CD4-positive, alpha-beta T cell (primary cell): ENCODE measurements at regions of chr2 and their contacts with region 1.

Region 1: GRCh38 chr2:241069821-241070281 is 32.2 kb downstream of the MTERF4 start:
- DNase-seq: peak in 1 of 14 experiments; percentile 18
- ATAC-seq: no peak
- H3K4me3 ChIP-seq: no peak overlapping the region
- H3K4me3 Mint-ChIP-seq: no peak overlapping the region
- H3K27ac ChIP-seq: no peak overlapping the region
- H3K27ac Mint-ChIP-seq: no peak overlapping the region
- H3K4me1 ChIP-seq: no peaks in the 10 kb centered on the region
- H3K4me1 Mint-ChIP-seq: no peaks in the 10 kb centered on the region
- H3K27me3 ChIP-seq: no peaks in the 10 kb centered on the region
- H3K27me3 Mint-ChIP-seq: no peaks in the 10 kb centered on the region
- CTCF ChIP-seq: no peak

Region 2: DNA sequence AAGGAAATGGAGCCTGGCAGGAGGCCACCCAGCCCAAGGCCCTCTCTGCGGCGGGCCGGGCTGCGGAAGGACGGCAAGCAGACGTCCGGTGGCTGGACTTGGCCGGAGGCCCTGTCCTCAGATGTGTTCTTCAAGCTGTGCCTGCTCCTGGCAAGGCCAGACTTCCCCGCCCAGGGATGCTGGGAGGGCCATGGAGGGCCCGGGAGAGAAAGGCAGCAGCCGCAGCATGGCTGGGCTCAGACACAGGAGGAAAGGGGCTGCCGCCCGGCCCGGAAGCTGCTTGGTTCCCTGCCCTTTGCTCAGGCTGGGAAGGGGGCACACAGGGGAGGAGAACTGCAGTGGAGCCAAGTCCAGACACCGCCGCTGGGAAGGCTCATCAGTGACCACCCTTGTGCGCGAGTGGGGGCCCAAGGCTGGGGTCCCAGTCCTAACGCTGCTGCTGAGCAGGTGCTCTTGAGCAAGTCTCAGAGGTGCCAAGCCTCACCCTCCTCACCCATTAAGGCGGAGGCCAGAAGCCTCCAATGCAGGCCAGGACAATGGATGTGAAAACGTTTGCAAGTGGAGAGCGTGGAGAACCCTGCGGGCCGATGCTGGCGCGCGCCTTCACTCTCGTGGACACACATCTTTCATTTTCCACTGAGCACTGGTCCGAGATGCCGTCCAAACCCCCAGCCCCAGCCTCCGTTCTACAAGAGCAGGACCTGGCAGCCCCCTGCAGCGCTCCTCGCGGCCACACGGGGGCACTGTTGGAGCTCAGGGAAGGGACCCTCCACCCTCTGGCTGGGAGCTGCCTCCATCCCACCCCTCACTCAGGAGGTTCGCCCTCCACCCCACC is 155.8 kb before region 1 on chr2:
- CTCF ChIA-PET with region 1: no interaction called
- POLR2A ChIA-PET with region 1: no interaction called
- intact Hi-C with region 1: loop called in 1 of 2 experiments (anchors 10 kb)
- DNase-seq: peak; percentile 49 to 74 (median 62)
- ATAC-seq: peak; percentile 79
- H3K4me3 ChIP-seq: no peak overlapping the region
- H3K4me3 Mint-ChIP-seq: no peak overlapping the region
- H3K27ac ChIP-seq: no peak overlapping the region
- H3K27ac Mint-ChIP-seq: no peak overlapping the region
- H3K4me1 ChIP-seq: peaks cover 3% of the 10 kb centered on the region
- H3K4me1 Mint-ChIP-seq: no peaks in the 10 kb centered on the region
- H3K27me3 ChIP-seq: peaks cover 29 to 31% of the 10 kb centered on the region in 2 experiments
- H3K27me3 Mint-ChIP-seq: peaks cover 25% of the 10 kb centered on the region
- CTCF ChIP-seq: peak; percentile 87

Region 3: DNA sequence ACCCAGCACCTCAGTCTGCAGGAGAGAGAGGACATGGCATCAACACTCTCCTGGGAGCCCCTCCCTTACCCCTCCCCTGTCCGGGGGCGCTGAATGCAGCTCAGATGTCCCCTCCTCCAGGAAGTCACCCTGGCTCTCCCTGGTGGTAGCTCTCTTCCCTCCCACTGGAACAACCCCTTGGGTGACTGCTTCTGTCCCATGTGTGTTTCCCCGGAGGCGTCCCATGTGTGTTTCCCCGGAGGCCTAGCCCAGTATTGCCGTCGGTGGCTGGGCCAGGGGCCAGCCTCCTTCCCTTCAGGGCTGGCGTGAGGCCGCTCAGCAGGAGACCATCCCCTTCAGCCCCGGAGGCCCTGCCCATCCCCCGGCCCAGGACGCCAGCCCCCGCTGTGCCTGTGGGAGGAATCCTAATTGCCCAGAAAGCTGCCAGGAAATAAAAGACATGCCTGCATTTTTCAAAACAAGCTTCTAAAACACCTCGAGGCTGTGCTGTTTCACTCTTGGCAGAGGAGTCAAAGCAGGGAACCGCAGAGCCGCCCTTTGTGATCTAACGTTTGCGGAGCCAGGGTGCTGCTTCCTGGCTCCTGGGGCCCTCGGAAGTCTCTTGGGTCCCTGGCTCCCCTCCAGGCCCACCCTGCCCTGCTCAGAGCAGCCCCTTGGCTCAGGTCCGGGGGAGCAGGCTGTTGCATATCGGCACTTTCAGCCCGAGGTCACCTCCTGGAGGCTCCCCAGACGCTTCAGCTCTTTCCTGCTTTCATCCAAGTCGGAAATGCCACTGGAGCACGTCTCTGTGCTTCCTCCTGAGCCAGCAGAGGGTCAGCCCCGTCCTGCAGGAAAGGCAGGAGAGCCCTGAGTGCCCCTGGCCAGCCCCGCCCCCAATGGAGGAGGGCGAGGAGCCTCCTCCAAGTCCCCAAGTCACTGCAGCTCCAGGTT is 60.0 kb before region 1 on chr2:
- CTCF ChIA-PET with region 1: no interaction called
- POLR2A ChIA-PET with region 1: no interaction called
- intact Hi-C with region 1: loop called in 1 of 2 experiments (anchors 10 kb)
- DNase-seq: peak; percentile 24 to 73 (median 57)
- ATAC-seq: peak; percentile 87
- H3K4me3 ChIP-seq: peak overlapping the region; percentile 34
- H3K4me3 Mint-ChIP-seq: peak overlapping the region; percentile 79
- H3K27ac ChIP-seq: peak overlapping the region; percentile 49 to 59
- H3K27ac Mint-ChIP-seq: peak overlapping the region; percentile 90
- H3K4me1 ChIP-seq: peaks cover 44% of the 10 kb centered on the region
- H3K4me1 Mint-ChIP-seq: peaks cover 39% of the 10 kb centered on the region
- H3K27me3 ChIP-seq: peaks cover 0 to 3% of the 10 kb centered on the region in 2 experiments
- H3K27me3 Mint-ChIP-seq: no peaks in the 10 kb centered on the region
- CTCF ChIP-seq: no peak